ENCODE measurements at regions of chr6 and their contacts with region 1.

Region 1: GRCh38 chr6:149508485-149508884 is 23.7 kb upstream of the ZC3H12D start:
- DNase-seq: no peak
- H3K4me3 Mint-ChIP-seq: peak overlapping the region; percentile 26
- H3K27ac Mint-ChIP-seq: peak overlapping the region; percentile 60
- H3K4me1 Mint-ChIP-seq: peaks cover 43% of the 10 kb centered on the region
- H3K27me3 Mint-ChIP-seq: no peaks in the 10 kb centered on the region

Region 2: GRCh38 chr6:149484733-149485700 is 23.5 kb before region 1 on chr6 and contains the start of gene ZC3H12D:
- CTCF ChIA-PET with region 1: interaction called, 16 read pairs
- POLR2A ChIA-PET with region 1: interaction called, 6 read pairs
- DNase-seq: peak; percentile 86
- H3K4me3 Mint-ChIP-seq: peak within 1 kb of the TSS; percentile 98
- H3K27ac Mint-ChIP-seq: peak within 1 kb of the TSS; percentile 96
- H3K4me1 Mint-ChIP-seq: peaks cover 41% of the 10 kb centered on the region
- H3K27me3 Mint-ChIP-seq: no peaks in the 10 kb centered on the region
- total RNA-seq, gene ZC3H12D: 37.4 to 37.6 TPM

Region 3: GRCh38 chr6:149493761-149494320 is 14.6 kb before region 1 on chr6:
- CTCF ChIA-PET with region 1: interaction called, 6 read pairs
- POLR2A ChIA-PET with region 1: interaction called, 20 read pairs
- DNase-seq: no peak
- H3K4me3 Mint-ChIP-seq: no peak overlapping the region
- H3K27ac Mint-ChIP-seq: peak overlapping the region; percentile 93
- H3K4me1 Mint-ChIP-seq: peaks cover 60% of the 10 kb centered on the region
- H3K27me3 Mint-ChIP-seq: no peaks in the 10 kb centered on the region

Region 4: DNA sequence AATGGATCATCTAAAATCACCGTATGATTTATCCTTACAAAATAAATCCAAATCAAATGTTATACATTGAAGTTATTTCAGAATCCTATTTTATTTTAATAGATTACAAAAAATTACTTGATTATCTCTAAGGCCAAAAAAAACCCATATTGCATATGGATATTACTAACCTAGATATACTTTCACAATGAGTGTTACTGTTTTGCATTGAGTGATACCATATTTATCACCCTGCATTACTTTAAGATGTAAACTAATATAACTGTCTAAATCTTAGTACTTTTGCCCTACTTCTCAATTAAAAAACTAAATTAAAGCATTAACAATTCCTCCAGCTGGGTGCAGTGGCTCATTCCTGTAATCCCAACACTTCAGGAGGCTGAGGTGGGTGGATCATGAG is 26.3 kb after region 1 on chr6:
- CTCF ChIA-PET with region 1: no interaction called
- POLR2A ChIA-PET with region 1: no interaction called
- DNase-seq: no peak
- H3K4me3 Mint-ChIP-seq: no peak overlapping the region
- H3K27ac Mint-ChIP-seq: no peak overlapping the region
- H3K4me1 Mint-ChIP-seq: no peaks in the 10 kb centered on the region
- H3K27me3 Mint-ChIP-seq: no peaks in the 10 kb centered on the region